Endothelial cell of umbilical vein (primary cell): ENCODE measurements at regions of chr18 and their contacts with region 1.

Region 1: DNA sequence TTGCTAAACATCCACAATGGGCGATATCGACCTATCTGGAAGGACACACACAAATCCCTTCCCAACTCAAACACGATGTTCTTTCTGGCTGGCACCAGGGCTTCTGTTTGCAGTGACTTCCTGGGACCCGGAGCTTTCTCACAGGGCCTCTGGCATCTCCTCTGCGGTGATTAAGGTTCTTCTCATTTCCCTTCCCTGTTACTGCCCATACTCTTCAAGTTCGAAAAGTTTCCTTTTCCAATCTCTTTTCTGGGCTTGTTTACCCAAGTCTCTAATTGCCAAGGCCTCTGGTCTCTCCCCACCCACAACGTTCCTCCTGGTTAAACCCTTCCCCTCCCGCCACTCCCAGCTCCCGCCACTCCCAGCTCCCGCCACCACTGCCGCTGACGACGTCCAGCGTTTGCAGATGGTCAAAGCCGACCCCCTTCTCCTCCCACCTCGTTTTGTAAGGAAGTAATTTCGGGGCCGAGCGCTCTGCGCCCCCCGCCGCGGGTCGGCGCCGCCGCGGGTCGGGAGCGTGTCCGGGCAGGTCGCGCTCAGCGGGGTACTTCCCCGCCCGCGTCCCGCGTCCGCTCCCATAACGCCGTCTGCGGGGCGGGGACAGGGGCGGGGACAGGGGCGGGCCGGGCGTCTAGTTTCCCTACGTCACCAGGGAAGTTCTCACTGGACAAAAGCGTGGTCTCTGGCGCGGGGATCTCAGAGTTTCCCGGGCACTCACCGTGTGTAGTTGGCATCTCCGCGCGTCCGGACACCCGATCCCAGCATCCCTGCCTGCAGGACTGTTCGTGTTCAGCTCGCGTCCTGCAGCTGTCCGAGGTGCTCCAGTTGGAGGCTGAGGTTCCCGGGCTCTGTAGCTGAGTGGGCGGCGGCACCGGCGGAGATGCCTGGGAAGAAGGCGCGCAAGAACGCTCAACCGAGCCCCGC is at the start of gene PMAIP1:
- DNase-seq: peak; percentile 91
- H3K4me3 ChIP-seq: peak within 1 kb of the TSS; percentile 58 to 88 (median 76)
- H3K27ac ChIP-seq: peak within 1 kb of the TSS; percentile 75
- H3K4me1 ChIP-seq: peaks cover 27% of the 10 kb centered on the region
- H3K27me3 ChIP-seq: peaks cover 1 to 9% of the 10 kb centered on the region in 2 experiments
- CTCF ChIP-seq: no peak
- POLR2A ChIP-seq: peak; percentile 99
- total RNA-seq, gene PMAIP1: 11.9 and 13.5 TPM in 2 replicates

Region 2: DNA sequence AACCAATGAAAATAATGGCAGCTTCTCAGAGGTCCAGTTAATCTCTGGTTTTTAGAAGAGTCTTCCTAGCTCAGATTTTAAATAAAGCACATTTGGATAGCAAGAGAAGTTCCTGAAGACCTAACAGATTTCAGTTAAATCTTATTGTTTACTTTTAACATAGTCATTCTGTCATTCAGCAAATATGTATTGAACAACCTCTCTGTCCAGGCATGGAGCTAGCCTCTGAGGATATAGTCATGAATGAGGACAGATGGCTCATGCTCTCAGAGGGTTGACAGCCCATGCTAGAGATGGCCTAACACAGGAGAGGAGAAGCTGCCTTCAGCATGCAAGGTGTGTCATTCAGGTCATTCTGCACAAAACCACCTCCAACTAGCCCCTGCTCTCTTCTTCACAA is 208.6 kb before region 1 on chr18:
- CTCF ChIA-PET with region 1: no interaction called
- POLR2A ChIA-PET with region 1: no interaction called
- dilution Hi-C with region 1: no loop called
- intact Hi-C with region 1: no loop called
- DNase-seq: no peak
- H3K4me3 ChIP-seq: no peak overlapping the region
- H3K27ac ChIP-seq: no peak overlapping the region
- H3K4me1 ChIP-seq: no peaks in the 10 kb centered on the region
- H3K27me3 ChIP-seq: peaks cover 10 to 13% of the 10 kb centered on the region in 2 experiments
- CTCF ChIP-seq: no peak
- POLR2A ChIP-seq: no peak

Region 3: GRCh38 chr18:59874166-59874565 is 25.4 kb before region 1 on chr18:
- CTCF ChIA-PET with region 1: interaction called, 7 read pairs
- POLR2A ChIA-PET with region 1: interaction called, 26 read pairs
- dilution Hi-C with region 1: no loop called
- intact Hi-C with region 1: loop called (anchors 1 kb)
- DNase-seq: peak; percentile 73
- H3K4me3 ChIP-seq: peak overlapping the region in 1 of 3 experiments; percentile 6
- H3K27ac ChIP-seq: peak overlapping the region; percentile 85
- H3K4me1 ChIP-seq: peaks cover 19% of the 10 kb centered on the region
- H3K27me3 ChIP-seq: no peaks in the 10 kb centered on the region
- CTCF ChIP-seq: no peak
- POLR2A ChIP-seq: no peak